WTC11 (cell line): ENCODE measurements at regions of chr14 and their contacts with region 1.

Region 1: DNA sequence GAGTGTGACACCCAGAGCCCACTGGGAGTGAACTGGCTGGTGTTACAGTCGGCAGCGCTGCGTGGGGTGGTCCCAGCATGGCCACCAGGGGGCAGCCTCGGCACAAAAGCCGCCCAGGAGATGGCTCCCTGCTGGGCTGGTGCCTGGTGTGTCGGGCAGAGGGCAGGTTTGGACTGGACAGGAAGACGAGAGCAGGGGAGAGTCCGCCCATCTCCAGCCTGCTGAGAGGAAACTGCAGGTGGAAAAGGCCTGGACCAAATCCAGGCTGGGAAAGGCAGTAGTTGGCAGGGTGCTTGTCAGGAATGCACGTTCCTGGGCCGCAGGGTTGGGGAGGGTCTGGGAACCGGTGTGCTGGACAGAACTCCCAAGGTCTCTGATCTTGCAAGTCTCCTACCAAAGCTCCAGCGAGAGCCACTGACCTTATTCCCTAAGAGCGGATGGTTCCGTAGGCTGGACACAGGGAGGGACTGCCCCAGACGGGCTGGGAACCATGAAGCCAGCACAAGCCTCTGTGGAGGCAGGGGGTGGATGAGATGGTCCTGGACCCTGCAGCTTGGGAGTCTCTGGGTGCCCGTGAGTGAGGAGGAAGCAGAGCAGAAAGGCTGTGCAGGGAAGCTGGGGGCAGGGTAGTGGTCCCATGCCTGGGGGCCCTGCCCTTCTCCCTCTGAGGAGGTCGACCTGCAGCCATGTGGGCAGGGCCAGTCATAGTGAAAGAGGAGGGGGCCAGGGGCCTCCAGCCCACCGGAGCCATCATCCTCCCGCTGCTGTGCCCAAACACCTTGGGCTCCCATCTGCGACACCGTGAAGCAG is 1.8 kb downstream of the AHNAK2 start:
- DNase-seq: peak; percentile 81
- ATAC-seq: peak; percentile 4; the same call in 1 of the 2 replicates
- H3K4me3 Mint-ChIP-seq: peak overlapping the region; percentile 27
- H3K27ac Mint-ChIP-seq: no peak overlapping the region
- H3K4me1 Mint-ChIP-seq: peaks cover 11% of the 10 kb centered on the region; the same call in 1 of the 2 replicates
- H3K27me3 Mint-ChIP-seq: peaks cover 44% of the 10 kb centered on the region
- CTCF ChIP-seq: peak; percentile 94

Region 2: GRCh38 chr14:104895786-104896661 is 80.4 kb before region 1 on chr14:
- CTCF ChIA-PET with region 1: interaction called, 10 read pairs
- POLR2A ChIA-PET with region 1: no interaction called
- DNase-seq: no peak
- ATAC-seq: no peak
- H3K4me3 Mint-ChIP-seq: no peak overlapping the region
- H3K27ac Mint-ChIP-seq: no peak overlapping the region
- H3K4me1 Mint-ChIP-seq: peaks cover 2% of the 10 kb centered on the region; the same call in 1 of the 2 replicates
- H3K27me3 Mint-ChIP-seq: no peaks in the 10 kb centered on the region; the same call in 1 of the 2 replicates
- CTCF ChIP-seq: no peak

Region 3: GRCh38 chr14:104932676-104933631 is 43.4 kb before region 1 on chr14:
- CTCF ChIA-PET with region 1: interaction called, 12 read pairs
- POLR2A ChIA-PET with region 1: no interaction called
- DNase-seq: peak; percentile 87
- ATAC-seq: peak; percentile 77
- H3K4me3 Mint-ChIP-seq: peak overlapping the region; percentile 62
- H3K27ac Mint-ChIP-seq: no peak overlapping the region
- H3K4me1 Mint-ChIP-seq: no peaks in the 10 kb centered on the region
- H3K27me3 Mint-ChIP-seq: peaks cover 74% of the 10 kb centered on the region
- CTCF ChIP-seq: peak; percentile 58

Region 4: GRCh38 chr14:104940526-104941150 is 35.8 kb before region 1 on chr14:
- CTCF ChIA-PET with region 1: interaction called, 11 read pairs
- POLR2A ChIA-PET with region 1: no interaction called
- DNase-seq: peak; percentile 9
- ATAC-seq: peak; percentile 59; the same call in 1 of the 2 replicates
- H3K4me3 Mint-ChIP-seq: no peak overlapping the region
- H3K27ac Mint-ChIP-seq: no peak overlapping the region; the same call in 1 of the 2 replicates
- H3K4me1 Mint-ChIP-seq: no peaks in the 10 kb centered on the region
- H3K27me3 Mint-ChIP-seq: peaks cover 47% of the 10 kb centered on the region
- CTCF ChIP-seq: no peak

Region 5: DNA sequence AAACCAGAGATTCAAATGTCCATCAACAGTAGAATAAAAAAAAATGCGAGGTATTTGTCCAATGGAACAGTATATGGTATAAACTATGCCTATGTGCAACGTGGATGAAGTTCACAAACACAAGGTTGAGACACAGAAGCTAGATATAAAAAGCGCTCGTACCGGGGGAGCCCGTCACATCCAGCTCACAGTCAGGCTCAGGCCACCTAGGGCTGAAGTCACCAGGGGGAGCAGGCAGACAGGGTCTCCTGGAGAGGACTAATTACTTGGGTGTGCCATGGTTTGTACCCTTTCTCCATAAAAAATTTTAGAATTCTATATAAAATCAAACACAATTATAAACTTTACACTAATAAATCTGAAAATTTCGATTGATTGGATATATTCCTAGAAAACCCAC is 11.9 kb before region 1 on chr14:
- CTCF ChIA-PET with region 1: interaction called, 10 read pairs
- POLR2A ChIA-PET with region 1: no interaction called
- DNase-seq: no peak
- ATAC-seq: no peak
- H3K4me3 Mint-ChIP-seq: no peak overlapping the region
- H3K27ac Mint-ChIP-seq: no peak overlapping the region
- H3K4me1 Mint-ChIP-seq: peaks cover 6% of the 10 kb centered on the region
- H3K27me3 Mint-ChIP-seq: peaks cover 5% of the 10 kb centered on the region
- CTCF ChIP-seq: no peak